Ascending aorta (tissue), 2 donors: ENCODE measurements at regions of chr6 and their contacts with region 1.

Region 1: DNA sequence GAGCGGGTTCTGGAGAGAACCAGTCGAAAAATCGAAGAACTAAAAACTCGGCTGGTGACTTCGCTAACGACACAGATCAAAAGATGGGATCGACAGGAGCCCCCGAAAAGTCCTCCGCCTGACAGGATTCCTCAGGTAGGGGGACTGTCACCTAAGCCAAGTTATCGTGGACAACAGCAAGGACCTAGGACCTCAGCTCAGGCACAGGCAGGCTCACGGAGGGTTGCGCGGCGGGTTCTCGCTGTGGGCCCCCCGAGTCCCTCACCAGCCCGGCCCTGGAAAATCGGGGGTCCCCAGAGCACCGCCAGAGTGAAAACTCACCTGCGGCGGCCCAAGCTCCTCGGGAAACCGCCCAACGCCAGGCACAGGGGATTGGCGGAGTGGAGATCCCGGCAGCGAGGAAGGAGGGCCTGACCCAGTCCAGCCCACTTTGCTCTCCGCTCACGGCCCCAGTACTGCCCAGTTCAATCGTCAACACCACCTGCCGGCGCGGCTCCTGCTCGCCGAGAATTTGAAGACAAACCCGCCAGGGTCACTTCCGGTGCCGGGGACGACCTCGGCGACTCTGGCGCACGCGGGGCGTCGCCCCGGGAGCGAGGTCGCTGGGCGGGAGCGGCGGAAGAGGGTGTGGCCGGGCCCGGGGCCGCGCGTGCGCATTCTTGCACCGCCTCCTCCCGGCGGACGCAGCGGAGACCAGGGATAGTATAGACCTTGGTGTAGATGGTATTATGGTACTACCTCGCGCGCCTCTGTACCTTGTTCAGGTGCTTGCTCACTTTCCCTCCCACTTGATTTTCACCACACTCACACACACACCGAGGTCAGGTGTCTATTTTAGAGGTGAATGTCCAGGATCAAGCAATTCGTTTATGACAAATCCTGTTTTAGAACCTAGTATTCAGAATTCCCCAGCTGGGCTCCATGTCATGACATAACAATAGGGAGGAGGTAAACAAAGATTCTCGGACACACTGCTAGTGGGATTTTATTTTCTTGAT is at the start of gene KATNA1:
- DNase-seq: peak; percentile 14 to 90
- H3K4me3 ChIP-seq: peak within 1 kb of the TSS; percentile 78 to 92
- H3K27ac ChIP-seq: peak within 1 kb of the TSS; percentile 64 to 89
- H3K4me1 ChIP-seq: peaks cover 0 to 7% of the 10 kb centered on the region in 2 donors
- H3K27me3 ChIP-seq: no peaks in the 10 kb centered on the region
- CTCF ChIP-seq: no peak
- total RNA-seq, gene KATNA1: 0.64 TPM

Region 2: GRCh38 chr6:149389509-149390297 is 258.7 kb before region 1 on chr6:
- intact Hi-C with region 1: no loop called
- DNase-seq: no peak
- H3K4me3 ChIP-seq: no peak overlapping the region
- H3K27ac ChIP-seq: no peak overlapping the region
- H3K4me1 ChIP-seq: peaks cover 0 to 8% of the 10 kb centered on the region in 2 donors
- H3K27me3 ChIP-seq: no peaks in the 10 kb centered on the region
- CTCF ChIP-seq: no peak

Region 3: GRCh38 chr6:149545754-149546528 is 102.5 kb before region 1 on chr6 and contains the start of gene PPIL4:
- intact Hi-C with region 1: loop called (anchors 1 kb)
- DNase-seq: peak; percentile 87 to 98
- H3K4me3 ChIP-seq: peak within 1 kb of the TSS; percentile 72 to 84
- H3K27ac ChIP-seq: peak within 1 kb of the TSS; percentile 88 to 98
- H3K4me1 ChIP-seq: peaks cover 4 to 25% of the 10 kb centered on the region in 2 donors
- H3K27me3 ChIP-seq: no peaks in the 10 kb centered on the region
- CTCF ChIP-seq: peak; percentile 61 to 70 (median 70)
- total RNA-seq, gene PPIL4: 8.9 TPM

Region 4: GRCh38 chr6:149696901-149697300 is 48.5 kb after region 1 on chr6:
- intact Hi-C with region 1: no loop called
- DNase-seq: no peak
- H3K4me3 ChIP-seq: no peak overlapping the region
- H3K27ac ChIP-seq: no peak overlapping the region
- H3K4me1 ChIP-seq: peaks cover 0 to 13% of the 10 kb centered on the region in 2 donors
- H3K27me3 ChIP-seq: no peaks in the 10 kb centered on the region
- CTCF ChIP-seq: no peak